ENCODE measurements at regions of chr6 and their contacts with region 1.

Region 1: DNA sequence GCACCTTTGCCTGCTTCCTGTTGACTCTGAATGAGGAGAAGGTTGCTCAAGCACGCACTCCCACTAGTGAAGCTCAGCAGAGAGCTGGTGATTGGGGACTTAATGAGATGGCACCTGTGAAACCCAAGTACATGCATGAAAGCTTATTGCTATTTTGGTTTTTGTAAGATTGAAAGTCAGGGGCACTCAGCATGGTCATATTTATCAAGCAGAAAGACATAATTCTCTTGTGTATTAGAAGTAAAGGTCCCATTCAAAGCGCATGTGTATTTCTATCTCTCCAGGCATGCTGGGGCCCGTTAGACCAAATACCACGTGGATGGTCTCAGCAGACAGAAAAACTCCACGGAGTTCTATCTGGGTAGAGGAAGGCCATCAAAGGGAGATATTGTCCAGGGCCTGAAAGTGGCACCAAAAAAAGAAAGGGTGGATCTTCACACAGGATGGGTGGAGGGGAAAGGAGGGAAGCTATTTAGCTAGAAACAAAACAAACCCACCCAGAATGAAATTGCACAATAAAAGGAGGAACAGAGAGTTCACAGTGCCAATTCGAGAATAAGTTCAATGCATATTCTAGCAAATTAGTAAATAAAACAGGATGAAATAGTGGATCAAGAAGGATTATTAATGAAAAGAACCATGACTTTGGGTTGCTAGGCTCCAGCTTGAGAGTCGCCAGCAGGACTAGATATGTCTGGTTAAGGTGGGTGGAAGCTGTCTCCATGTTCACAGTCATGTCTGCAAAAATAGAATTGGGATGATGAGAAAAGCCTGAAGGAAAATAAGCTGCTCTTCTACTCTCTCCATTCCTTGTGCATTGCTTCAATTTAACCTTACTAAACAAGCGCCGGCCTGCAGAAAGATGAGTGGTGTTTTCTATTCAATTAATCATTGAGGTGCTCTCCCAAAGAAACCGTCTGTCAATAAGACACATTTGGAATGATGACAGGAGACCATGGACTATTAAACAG is 224.9 kb upstream of the DTNBP1 start:
- DNase-seq: no peak
- ATAC-seq: no peak
- H3K4me3 ChIP-seq: no peak overlapping the region
- H3K4me3 Mint-ChIP-seq: no peak overlapping the region
- H3K27ac ChIP-seq: no peak overlapping the region
- H3K27ac Mint-ChIP-seq: no peak overlapping the region
- H3K4me1 ChIP-seq: no peaks in the 10 kb centered on the region
- H3K4me1 Mint-ChIP-seq: peaks cover 14% of the 10 kb centered on the region
- H3K27me3 ChIP-seq: no peaks in the 10 kb centered on the region
- H3K27me3 Mint-ChIP-seq: peaks cover 2% of the 10 kb centered on the region
- CTCF ChIP-seq: no peak

Region 2: GRCh38 chr6:15569035-15569995 is 318.5 kb before region 1 on chr6:
- CTCF ChIA-PET with region 1: no interaction called
- POLR2A ChIA-PET with region 1: no interaction called
- intact Hi-C with region 1: no loop called
- DNase-seq: no peak
- ATAC-seq: no peak
- H3K4me3 ChIP-seq: no peak overlapping the region
- H3K4me3 Mint-ChIP-seq: no peak overlapping the region
- H3K27ac ChIP-seq: no peak overlapping the region
- H3K27ac Mint-ChIP-seq: no peak overlapping the region
- H3K4me1 ChIP-seq: no peaks in the 10 kb centered on the region
- H3K4me1 Mint-ChIP-seq: peaks cover 15% of the 10 kb centered on the region
- H3K27me3 ChIP-seq: no peaks in the 10 kb centered on the region
- H3K27me3 Mint-ChIP-seq: no peaks in the 10 kb centered on the region
- CTCF ChIP-seq: no peak

Region 3: DNA sequence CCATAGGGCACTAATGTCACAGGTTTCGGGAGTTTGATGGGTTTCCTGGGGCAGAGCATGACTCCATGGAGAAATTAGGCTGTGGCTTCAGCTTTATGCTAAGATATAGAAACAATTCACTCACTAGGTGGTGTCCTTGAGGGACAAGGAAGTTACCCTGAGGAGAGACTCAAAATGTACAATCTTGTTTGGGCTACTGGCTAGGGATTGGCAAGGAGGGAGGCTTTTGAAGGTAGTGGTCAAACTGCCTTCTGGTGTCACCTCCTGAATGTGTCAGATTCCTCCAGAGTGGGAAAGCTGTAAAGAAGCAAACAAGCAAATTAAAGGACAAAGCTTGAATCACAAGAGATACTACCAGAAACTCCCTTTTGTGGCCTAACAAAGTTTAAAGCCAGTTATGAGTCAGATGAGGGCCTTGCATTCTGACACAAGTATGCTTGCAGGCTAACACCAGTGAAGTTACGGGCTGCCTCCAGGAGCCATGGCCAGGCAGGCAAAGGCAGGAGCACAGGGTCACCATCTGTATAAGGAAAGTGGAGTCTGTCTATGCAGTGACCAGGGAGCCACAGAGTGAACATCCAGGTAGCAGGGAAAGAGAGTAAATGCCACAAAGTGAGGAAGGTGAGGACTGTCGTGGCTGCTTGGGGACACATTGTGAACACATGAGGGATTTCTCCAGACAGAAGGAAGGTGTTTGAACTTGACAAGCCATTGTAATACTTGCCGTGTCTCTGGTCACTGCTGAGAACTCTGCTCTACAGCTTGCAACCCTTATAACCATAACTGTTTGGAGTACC is 117.2 kb before region 1 on chr6:
- CTCF ChIA-PET with region 1: no interaction called
- POLR2A ChIA-PET with region 1: no interaction called
- intact Hi-C with region 1: no loop called
- DNase-seq: peak in 1 of 9 experiments; percentile 3
- ATAC-seq: no peak
- H3K4me3 ChIP-seq: no peak overlapping the region
- H3K4me3 Mint-ChIP-seq: no peak overlapping the region
- H3K27ac ChIP-seq: no peak overlapping the region
- H3K27ac Mint-ChIP-seq: no peak overlapping the region
- H3K4me1 ChIP-seq: no peaks in the 10 kb centered on the region
- H3K4me1 Mint-ChIP-seq: no peaks in the 10 kb centered on the region
- H3K27me3 ChIP-seq: no peaks in the 10 kb centered on the region
- H3K27me3 Mint-ChIP-seq: no peaks in the 10 kb centered on the region
- CTCF ChIP-seq: no peak

Region 4: GRCh38 chr6:15929685-15930084 is 41.9 kb after region 1 on chr6:
- CTCF ChIA-PET with region 1: no interaction called
- POLR2A ChIA-PET with region 1: no interaction called
- intact Hi-C with region 1: loop called in 1 of 2 experiments (anchors 1 kb)
- DNase-seq: no peak
- ATAC-seq: no peak
- H3K4me3 ChIP-seq: no peak overlapping the region
- H3K4me3 Mint-ChIP-seq: no peak overlapping the region
- H3K27ac ChIP-seq: no peak overlapping the region
- H3K27ac Mint-ChIP-seq: no peak overlapping the region
- H3K4me1 ChIP-seq: no peaks in the 10 kb centered on the region
- H3K4me1 Mint-ChIP-seq: no peaks in the 10 kb centered on the region
- H3K27me3 ChIP-seq: no peaks in the 10 kb centered on the region
- H3K27me3 Mint-ChIP-seq: peaks cover 2% of the 10 kb centered on the region
- CTCF ChIP-seq: no peak

Measured in CD8-positive, alpha-beta T cell (primary cell).